ENCODE measurements at regions of chr1 and their contacts with region 1.

Region 1: GRCh38 chr1:54715493-54716298 is at the start of gene TTC4:
- DNase-seq: peak; percentile 91
- ATAC-seq: peak; percentile 92
- H3K4me3 Mint-ChIP-seq: peak within 1 kb of the TSS; percentile 85
- H3K27ac Mint-ChIP-seq: peak within 1 kb of the TSS; percentile 92
- H3K4me1 Mint-ChIP-seq: peaks cover 29% of the 10 kb centered on the region
- H3K27me3 Mint-ChIP-seq: no peaks in the 10 kb centered on the region
- total RNA-seq, gene TTC4: 34.4 to 36.1 TPM

Region 2: GRCh38 chr1:53837924-53838652 is 877.6 kb before region 1 on chr1 and contains the start of gene NDC1:
- CTCF ChIA-PET with region 1: no interaction called
- POLR2A ChIA-PET with region 1: no interaction called
- intact Hi-C with region 1: loop called in 1 of 2 experiments (anchors 1 kb)
- DNase-seq: peak; percentile 92
- ATAC-seq: peak; percentile 93
- H3K4me3 Mint-ChIP-seq: peak within 1 kb of the TSS; percentile 100
- H3K27ac Mint-ChIP-seq: peak within 1 kb of the TSS; percentile 96
- H3K4me1 Mint-ChIP-seq: peaks cover 25% of the 10 kb centered on the region
- H3K27me3 Mint-ChIP-seq: peaks cover 2% of the 10 kb centered on the region
- total RNA-seq, gene NDC1: 31.2 to 38.5 TPM

Region 3: GRCh38 chr1:53945433-53946251 is 770.1 kb before region 1 on chr1 and contains the start of gene IFT25:
- CTCF ChIA-PET with region 1: no interaction called
- POLR2A ChIA-PET with region 1: no interaction called
- intact Hi-C with region 1: loop called in 1 of 2 experiments (anchors 2 kb)
- DNase-seq: peak; percentile 99
- ATAC-seq: peak; percentile 79
- H3K4me3 Mint-ChIP-seq: peak within 1 kb of the TSS; percentile 95
- H3K27ac Mint-ChIP-seq: peak within 1 kb of the TSS; percentile 89
- H3K4me1 Mint-ChIP-seq: peaks cover 50% of the 10 kb centered on the region
- H3K27me3 Mint-ChIP-seq: no peaks in the 10 kb centered on the region
- total RNA-seq, gene IFT25: 56.6 to 62.0 TPM

Region 4: DNA sequence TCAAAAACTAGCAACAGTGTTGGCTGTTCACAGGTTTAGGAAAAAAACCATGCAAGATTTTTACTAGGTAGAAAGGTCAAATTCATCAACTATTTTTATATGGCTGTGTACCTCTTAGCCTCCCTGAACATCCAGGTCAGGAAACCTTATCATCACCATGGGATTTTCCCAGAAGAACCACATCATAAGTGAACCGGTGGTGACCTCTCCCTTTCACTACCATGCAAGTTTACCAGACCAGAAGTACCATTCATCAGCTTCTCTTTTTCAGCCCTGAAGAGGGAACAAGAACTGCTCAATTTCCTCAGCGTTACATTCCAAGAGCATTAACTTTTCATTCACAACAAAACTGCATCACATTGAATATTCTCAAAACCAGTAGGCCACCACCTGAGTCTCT is 315.4 kb before region 1 on chr1:
- CTCF ChIA-PET with region 1: no interaction called
- POLR2A ChIA-PET with region 1: no interaction called
- intact Hi-C with region 1: loop called in 1 of 2 experiments (anchors 2 kb)
- DNase-seq: peak; percentile 67
- ATAC-seq: peak; percentile 70
- H3K4me3 Mint-ChIP-seq: peak overlapping the region; percentile 15
- H3K27ac Mint-ChIP-seq: peak overlapping the region; percentile 64
- H3K4me1 Mint-ChIP-seq: peaks cover 71% of the 10 kb centered on the region
- H3K27me3 Mint-ChIP-seq: no peaks in the 10 kb centered on the region

Region 5: GRCh38 chr1:54542120-54542961 is 173.4 kb before region 1 on chr1:
- CTCF ChIA-PET with region 1: no interaction called
- POLR2A ChIA-PET with region 1: no interaction called
- intact Hi-C with region 1: loop called in 1 of 2 experiments (anchors 1 kb)
- DNase-seq: peak; percentile 79
- ATAC-seq: peak; percentile 89
- H3K4me3 Mint-ChIP-seq: peak overlapping the region; percentile 74
- H3K27ac Mint-ChIP-seq: peak overlapping the region; percentile 58
- H3K4me1 Mint-ChIP-seq: peaks cover 18% of the 10 kb centered on the region
- H3K27me3 Mint-ChIP-seq: peaks cover 2% of the 10 kb centered on the region

Region 6: DNA sequence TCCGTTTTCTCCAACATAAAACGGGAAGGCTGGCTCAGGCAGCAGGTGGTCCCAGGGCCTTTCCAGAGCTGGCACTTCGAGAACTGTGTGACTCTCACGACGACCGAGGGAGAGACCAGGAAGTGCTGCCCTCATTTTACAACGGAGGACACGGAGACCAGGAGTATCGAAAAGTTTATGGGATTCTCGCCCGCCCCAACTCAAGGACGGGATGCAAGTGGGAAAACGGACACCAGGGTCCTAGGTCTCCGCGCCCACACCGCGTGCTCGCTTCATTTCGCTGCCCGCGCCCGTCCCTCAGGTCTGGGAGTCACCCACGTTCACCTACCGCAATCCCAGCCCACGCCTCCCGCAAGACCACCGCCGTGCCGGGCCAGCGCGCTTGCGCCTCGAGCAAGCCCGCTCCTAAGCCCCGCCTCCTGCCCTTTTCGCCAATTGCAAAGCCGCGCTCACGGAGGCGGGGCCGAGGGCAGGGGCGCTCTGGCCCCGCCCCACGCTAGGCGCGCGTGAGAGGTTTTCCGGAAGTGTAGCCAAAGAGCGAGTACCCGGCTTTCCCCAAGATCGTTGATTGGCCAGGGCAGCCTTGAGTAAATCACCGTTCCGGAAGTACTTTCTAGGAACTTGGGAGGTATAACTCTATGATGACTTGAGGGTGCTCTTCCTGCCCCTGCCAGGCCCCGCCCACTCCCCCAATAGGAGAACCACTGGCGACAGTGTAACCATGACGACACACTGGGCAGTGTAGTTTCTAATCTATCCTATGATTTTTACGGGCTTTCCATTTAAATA is 48.6 kb after region 1 on chr1 and contains the start of gene PARS2:
- CTCF ChIA-PET with region 1: interaction called, 4 read pairs
- POLR2A ChIA-PET with region 1: interaction called, 3 read pairs
- intact Hi-C with region 1: loop called (anchors 1 kb)
- DNase-seq: peak; percentile 98
- ATAC-seq: peak; percentile 99
- H3K4me3 Mint-ChIP-seq: peak within 1 kb of the TSS; percentile 89
- H3K27ac Mint-ChIP-seq: peak within 1 kb of the TSS; percentile 91
- H3K4me1 Mint-ChIP-seq: peaks cover 13% of the 10 kb centered on the region
- H3K27me3 Mint-ChIP-seq: no peaks in the 10 kb centered on the region
- total RNA-seq, gene PARS2: 6.3 to 6.8 TPM

Region 7: GRCh38 chr1:54886724-54887664 is 171.3 kb after region 1 on chr1 and contains the start of gene DHCR24:
- CTCF ChIA-PET with region 1: no interaction called
- POLR2A ChIA-PET with region 1: no interaction called
- intact Hi-C with region 1: loop called in 1 of 2 experiments (anchors 1 kb)
- DNase-seq: peak; percentile 88
- ATAC-seq: peak; percentile 96
- H3K4me3 Mint-ChIP-seq: peak within 1 kb of the TSS; percentile 89
- H3K27ac Mint-ChIP-seq: peak within 1 kb of the TSS; percentile 84
- H3K4me1 Mint-ChIP-seq: peaks cover 39% of the 10 kb centered on the region
- H3K27me3 Mint-ChIP-seq: peaks cover 8% of the 10 kb centered on the region
- total RNA-seq, gene DHCR24: 78.4 to 80.6 TPM

Region 8: DNA sequence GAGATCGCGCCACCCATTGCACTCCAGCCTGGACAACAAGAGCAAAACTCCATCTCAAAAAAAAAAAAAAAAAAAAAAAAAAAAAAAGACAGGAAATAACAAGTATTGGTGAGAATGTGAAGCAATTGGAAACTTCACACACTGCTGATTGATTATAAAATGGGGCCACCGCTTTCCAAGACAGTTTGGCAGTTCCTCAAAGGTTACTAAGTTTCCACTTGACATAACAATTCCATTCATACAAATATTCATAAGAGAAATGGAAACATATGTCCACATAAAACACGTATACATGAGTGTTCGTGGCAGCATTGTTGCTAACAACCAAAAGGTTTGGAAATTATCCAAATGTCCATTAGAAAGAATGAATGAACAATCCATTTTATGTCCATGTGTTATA is 473.2 kb after region 1 on chr1:
- CTCF ChIA-PET with region 1: no interaction called
- POLR2A ChIA-PET with region 1: no interaction called
- intact Hi-C with region 1: no loop called
- DNase-seq: no peak
- ATAC-seq: no peak
- H3K4me3 Mint-ChIP-seq: no peak overlapping the region
- H3K27ac Mint-ChIP-seq: peak overlapping the region; percentile 43
- H3K4me1 Mint-ChIP-seq: peaks cover 46% of the 10 kb centered on the region
- H3K27me3 Mint-ChIP-seq: no peaks in the 10 kb centered on the region